ENCODE measurements at regions of chr6 and their contacts with region 1.

Region 1: GRCh38 chr6:35731736-35732532 is 4.9 kb upstream of the ARMC12 start:
- DNase-seq: peak; percentile 99
- ATAC-seq: peak; percentile 57
- H3K4me3 Mint-ChIP-seq: peak overlapping the region; percentile 77
- H3K27ac Mint-ChIP-seq: peak overlapping the region; percentile 95
- H3K4me1 Mint-ChIP-seq: peaks cover 84% of the 10 kb centered on the region
- H3K27me3 Mint-ChIP-seq: no peaks in the 10 kb centered on the region

Region 2: DNA sequence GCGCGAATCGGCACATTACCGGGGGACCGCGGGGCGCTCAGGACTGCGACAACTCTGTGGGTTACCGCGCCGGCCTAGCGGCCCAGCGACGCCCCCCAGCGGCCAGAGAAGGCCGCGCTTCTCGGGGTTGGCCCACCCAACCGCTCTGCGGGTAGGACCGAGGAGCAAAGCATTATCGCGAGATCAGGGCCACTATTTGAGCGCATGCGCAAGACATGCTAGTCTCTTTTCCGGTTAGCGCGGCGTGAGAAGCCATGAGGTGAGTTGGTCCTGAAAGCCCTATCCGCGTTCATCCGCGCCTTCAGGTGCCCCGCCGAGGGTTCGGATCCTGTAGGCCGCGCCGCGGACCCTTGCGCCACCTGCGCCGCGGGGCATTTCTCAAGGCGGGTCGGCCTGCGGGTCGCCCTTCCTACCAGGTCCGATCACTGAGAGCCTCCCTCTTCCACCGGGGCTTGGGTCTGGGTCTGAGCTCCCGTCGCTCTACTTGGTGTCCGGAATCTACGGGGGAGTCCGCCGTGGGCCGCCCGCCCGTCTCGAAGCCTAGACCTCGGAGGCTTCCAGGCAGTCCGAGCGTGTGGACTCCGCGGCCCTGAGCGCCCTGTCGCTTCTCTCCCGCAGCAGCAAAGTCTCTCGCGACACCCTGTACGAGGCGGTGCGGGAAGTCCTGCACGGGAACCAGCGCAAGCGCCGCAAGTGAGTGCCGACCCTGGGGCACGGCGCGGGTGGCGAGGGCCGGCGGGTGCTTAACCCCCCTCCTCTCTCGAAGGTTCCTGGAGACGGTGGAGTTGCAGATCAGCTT is 263.6 kb before region 1 on chr6 and contains the start of gene RPL10A:
- CTCF ChIA-PET with region 1: interaction called, 5 read pairs
- POLR2A ChIA-PET with region 1: interaction called, 5 read pairs
- intact Hi-C with region 1: loop called in 1 of 2 experiments (anchors 2 kb)
- DNase-seq: peak; percentile 97
- ATAC-seq: peak; percentile 87
- H3K4me3 Mint-ChIP-seq: peak within 1 kb of the TSS; percentile 93
- H3K27ac Mint-ChIP-seq: peak within 1 kb of the TSS; percentile 98
- H3K4me1 Mint-ChIP-seq: peaks cover 43% of the 10 kb centered on the region
- H3K27me3 Mint-ChIP-seq: no peaks in the 10 kb centered on the region
- total RNA-seq, gene RPL10A: 1,952 to 2,334 TPM

Region 3: GRCh38 chr6:35583893-35584688 is 147.8 kb before region 1 on chr6:
- CTCF ChIA-PET with region 1: interaction called, 178 read pairs
- POLR2A ChIA-PET with region 1: interaction called, 4 read pairs
- intact Hi-C with region 1: loop called (anchors 1 kb)
- DNase-seq: peak; percentile 86
- ATAC-seq: peak; percentile 73
- H3K4me3 Mint-ChIP-seq: no peak overlapping the region
- H3K27ac Mint-ChIP-seq: no peak overlapping the region
- H3K4me1 Mint-ChIP-seq: peaks cover 61% of the 10 kb centered on the region
- H3K27me3 Mint-ChIP-seq: no peaks in the 10 kb centered on the region

Region 4: DNA sequence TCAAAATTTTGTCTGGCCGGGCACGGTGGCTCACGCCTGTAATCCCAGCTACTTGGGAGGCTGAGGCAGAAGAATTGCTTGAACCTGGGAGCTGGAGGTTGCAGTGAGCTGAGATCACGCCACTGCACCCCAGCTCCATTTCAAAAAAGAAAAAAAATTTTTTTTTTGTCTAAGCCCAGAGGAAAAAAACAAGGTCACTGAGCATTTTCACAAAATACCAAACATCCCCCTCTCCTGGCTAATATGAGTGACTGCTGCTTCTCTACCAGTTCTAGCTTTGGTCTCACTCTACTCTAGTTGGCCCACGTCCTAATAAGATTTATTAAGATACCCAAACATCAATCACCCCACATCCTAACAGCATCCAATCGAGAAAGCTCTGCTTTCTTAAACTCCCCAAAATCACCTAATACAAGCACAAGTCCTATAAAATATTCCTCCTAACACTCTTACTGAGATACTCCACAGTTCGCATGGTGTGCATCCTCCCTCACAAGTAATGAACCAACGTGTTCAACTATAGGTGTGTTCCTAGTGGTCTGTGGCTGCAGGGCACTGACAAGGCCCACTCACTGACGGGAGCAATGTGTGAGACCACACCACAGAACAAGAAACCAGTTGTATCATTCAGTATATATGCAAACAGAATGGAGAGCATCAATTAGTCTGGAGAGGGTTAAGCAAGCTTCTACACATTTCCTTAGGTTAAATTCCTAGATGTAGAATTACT is 107.4 kb before region 1 on chr6:
- CTCF ChIA-PET with region 1: interaction called, 39 read pairs
- POLR2A ChIA-PET with region 1: no interaction called
- intact Hi-C with region 1: loop called in 1 of 2 experiments (anchors 1 kb)
- DNase-seq: no peak
- ATAC-seq: peak; percentile 57
- H3K4me3 Mint-ChIP-seq: no peak overlapping the region
- H3K27ac Mint-ChIP-seq: peak overlapping the region; percentile 58
- H3K4me1 Mint-ChIP-seq: peaks cover 41% of the 10 kb centered on the region
- H3K27me3 Mint-ChIP-seq: no peaks in the 10 kb centered on the region

Region 5: GRCh38 chr6:35669451-35670045 is 62.4 kb before region 1 on chr6:
- CTCF ChIA-PET with region 1: interaction called, 47 read pairs
- POLR2A ChIA-PET with region 1: interaction called, 4 read pairs
- intact Hi-C with region 1: loop called (anchors 1 to 5 kb)
- DNase-seq: no peak
- ATAC-seq: peak; percentile 60
- H3K4me3 Mint-ChIP-seq: peak overlapping the region; percentile 59
- H3K27ac Mint-ChIP-seq: peak overlapping the region; percentile 87
- H3K4me1 Mint-ChIP-seq: peaks cover 49% of the 10 kb centered on the region
- H3K27me3 Mint-ChIP-seq: no peaks in the 10 kb centered on the region

Region 6: GRCh38 chr6:35719830-35720733 is 11.9 kb before region 1 on chr6:
- CTCF ChIA-PET with region 1: interaction called, 16 read pairs
- POLR2A ChIA-PET with region 1: interaction called, 6 read pairs
- intact Hi-C with region 1: loop called (anchors 1 kb)
- DNase-seq: peak; percentile 73
- ATAC-seq: peak; percentile 54
- H3K4me3 Mint-ChIP-seq: peak overlapping the region; percentile 75
- H3K27ac Mint-ChIP-seq: peak overlapping the region; percentile 90
- H3K4me1 Mint-ChIP-seq: peaks cover 81% of the 10 kb centered on the region
- H3K27me3 Mint-ChIP-seq: no peaks in the 10 kb centered on the region

Region 7: GRCh38 chr6:36678518-36679027 is 946.6 kb after region 1 on chr6 and contains the start of gene CDKN1A:
- CTCF ChIA-PET with region 1: no interaction called
- POLR2A ChIA-PET with region 1: no interaction called
- intact Hi-C with region 1: loop called in 1 of 2 experiments (anchors 5 kb)
- DNase-seq: peak; percentile 88
- ATAC-seq: peak; percentile 61
- H3K4me3 Mint-ChIP-seq: peak within 1 kb of the TSS; percentile 85
- H3K27ac Mint-ChIP-seq: peak within 1 kb of the TSS; percentile 86
- H3K4me1 Mint-ChIP-seq: peaks cover 45% of the 10 kb centered on the region
- H3K27me3 Mint-ChIP-seq: peaks cover 12% of the 10 kb centered on the region
- total RNA-seq, gene CDKN1A: 31.3 to 35.9 TPM